ENCODE measurements at regions of chr3 and their contacts with region 1.

Region 1: GRCh38 chr3:14261229-14261628 is 82.6 kb downstream of the LSM3 start:
- DNase-seq: peak; percentile 48
- H3K4me3 Mint-ChIP-seq: no peak overlapping the region
- H3K27ac Mint-ChIP-seq: no peak overlapping the region
- H3K4me1 Mint-ChIP-seq: no peaks in the 10 kb centered on the region
- H3K27me3 Mint-ChIP-seq: peaks cover 11% of the 10 kb centered on the region

Region 2: GRCh38 chr3:14467814-14468620 is 206.8 kb after region 1 on chr3:
- intact Hi-C with region 1: loop called (anchors 1 kb)
- DNase-seq: no peak
- H3K4me3 Mint-ChIP-seq: no peak overlapping the region
- H3K27ac Mint-ChIP-seq: no peak overlapping the region
- H3K4me1 Mint-ChIP-seq: peaks cover 10% of the 10 kb centered on the region
- H3K27me3 Mint-ChIP-seq: no peaks in the 10 kb centered on the region

Region 3: DNA sequence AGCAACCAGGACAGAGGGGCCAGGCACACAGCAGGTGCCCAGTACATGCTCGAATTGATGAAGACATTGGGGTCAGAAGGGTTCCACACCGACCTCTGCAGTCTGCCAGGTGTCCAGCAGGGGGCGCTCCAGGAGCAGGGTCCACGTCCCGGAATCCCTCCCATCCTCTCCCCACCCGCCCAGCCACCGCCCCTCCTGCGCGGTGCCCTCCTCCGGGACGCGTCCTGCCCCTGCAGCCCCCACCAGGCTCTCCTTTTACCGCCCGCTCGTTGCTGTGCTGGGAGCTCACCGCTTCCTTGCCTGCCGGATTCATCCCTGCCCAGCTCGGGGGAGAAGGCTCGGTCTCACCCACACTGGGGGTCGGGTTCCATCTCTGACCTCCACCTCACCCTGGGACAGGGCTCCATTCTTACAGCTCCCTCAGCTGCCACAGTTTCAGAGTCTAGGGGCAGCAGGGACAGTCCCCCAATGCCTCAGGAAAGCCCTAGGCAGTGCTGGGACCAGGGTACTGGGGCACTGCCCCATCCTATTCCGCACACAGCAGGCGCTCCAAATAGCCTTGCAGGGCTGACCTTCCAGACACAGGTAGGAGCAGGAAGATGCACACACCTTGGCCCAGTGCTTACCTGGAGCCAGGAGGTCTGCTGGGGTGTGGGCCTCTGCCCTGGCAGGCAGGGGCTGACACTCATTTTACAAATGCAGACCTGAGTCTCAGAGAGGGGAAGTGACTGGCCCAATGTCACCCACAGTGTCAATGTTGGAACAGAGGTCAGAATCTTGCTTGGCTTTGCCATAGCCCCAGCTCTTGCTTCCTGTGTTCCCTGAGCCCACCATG is 247.9 kb after region 1 on chr3:
- intact Hi-C with region 1: loop called (anchors 2 kb)
- DNase-seq: peak; percentile 49
- H3K4me3 Mint-ChIP-seq: no peak overlapping the region
- H3K27ac Mint-ChIP-seq: no peak overlapping the region
- H3K4me1 Mint-ChIP-seq: no peaks in the 10 kb centered on the region
- H3K27me3 Mint-ChIP-seq: no peaks in the 10 kb centered on the region

Region 4: DNA sequence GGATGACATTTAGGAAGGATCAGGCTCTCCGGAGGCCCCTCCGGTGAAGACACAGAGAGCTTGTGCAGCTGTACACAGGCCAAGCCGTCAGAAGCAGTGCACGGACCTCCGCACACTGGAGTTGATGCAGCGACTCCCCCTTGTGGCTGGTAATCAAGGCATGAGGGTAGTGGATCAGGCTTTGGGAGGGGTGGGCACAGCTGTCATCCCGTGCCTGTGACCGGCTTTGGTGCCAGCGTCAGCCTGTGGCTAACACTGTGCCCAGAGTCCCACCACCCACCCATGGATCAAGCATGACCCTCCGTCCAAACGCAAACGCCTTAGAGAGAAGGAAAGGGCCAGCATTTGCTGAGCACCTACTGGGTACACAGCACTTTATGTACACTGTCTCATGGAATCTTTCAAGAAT is 287.1 kb after region 1 on chr3:
- intact Hi-C with region 1: loop called (anchors 1 kb)
- DNase-seq: no peak
- H3K4me3 Mint-ChIP-seq: no peak overlapping the region
- H3K27ac Mint-ChIP-seq: no peak overlapping the region
- H3K4me1 Mint-ChIP-seq: no peaks in the 10 kb centered on the region
- H3K27me3 Mint-ChIP-seq: peaks cover 16% of the 10 kb centered on the region

Region 5: DNA sequence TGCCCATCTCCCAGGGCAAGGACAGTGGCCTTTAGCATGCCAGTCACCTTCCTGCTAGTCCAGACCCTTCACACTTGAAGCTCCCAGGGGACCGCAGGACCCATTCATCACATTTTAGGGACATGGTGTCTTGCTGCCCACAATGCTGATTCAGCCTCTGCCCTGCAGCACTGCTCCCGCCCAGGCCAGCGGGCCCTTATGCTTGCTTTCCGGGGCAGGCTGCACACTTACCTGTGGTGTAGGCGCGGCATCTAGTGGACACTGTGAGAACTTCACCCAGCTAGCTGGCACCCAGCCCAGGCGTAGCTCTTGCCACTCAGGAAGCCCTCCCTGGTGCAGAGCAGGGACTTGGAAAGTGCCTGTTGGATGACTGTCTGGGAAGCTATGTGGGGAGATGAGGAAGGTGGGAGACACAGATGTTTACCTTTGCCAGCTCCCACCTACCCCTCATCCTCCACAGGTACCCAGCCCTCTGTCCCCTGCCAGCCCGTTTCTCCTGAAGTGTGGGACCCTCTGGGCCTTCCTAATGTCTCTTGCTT is 659.9 kb after region 1 on chr3:
- intact Hi-C with region 1: loop called (anchors 5 kb)
- DNase-seq: peak; percentile 67
- H3K4me3 Mint-ChIP-seq: no peak overlapping the region
- H3K27ac Mint-ChIP-seq: no peak overlapping the region
- H3K4me1 Mint-ChIP-seq: no peaks in the 10 kb centered on the region
- H3K27me3 Mint-ChIP-seq: no peaks in the 10 kb centered on the region

Measured in activated T-helper 2 cell treated with anti-CD3 and anti-CD28 coated beads, Interferon-gamma antibody, Interleukin-2, Interleukin-4, amounts not matched to agents 10 μg/mL and 5 μg/mL and 100 μg/mL, durations not matched to agents 14 hours and 24 hours and 36 hours (primary cell).